ENCODE measurements at regions of chr20 and their contacts with region 1.

Region 1: GRCh38 chr20:62734881-62735821 is 26.5 kb downstream of the NTSR1 start:
- DNase-seq: peak in 1 of 2 experiments; percentile 32
- H3K4me3 ChIP-seq: no peak overlapping the region
- H3K27ac ChIP-seq: no peak overlapping the region
- H3K4me1 ChIP-seq: peaks cover 21% of the 10 kb centered on the region
- H3K27me3 ChIP-seq: no peaks in the 10 kb centered on the region
- CTCF ChIP-seq: no peak

Region 2: DNA sequence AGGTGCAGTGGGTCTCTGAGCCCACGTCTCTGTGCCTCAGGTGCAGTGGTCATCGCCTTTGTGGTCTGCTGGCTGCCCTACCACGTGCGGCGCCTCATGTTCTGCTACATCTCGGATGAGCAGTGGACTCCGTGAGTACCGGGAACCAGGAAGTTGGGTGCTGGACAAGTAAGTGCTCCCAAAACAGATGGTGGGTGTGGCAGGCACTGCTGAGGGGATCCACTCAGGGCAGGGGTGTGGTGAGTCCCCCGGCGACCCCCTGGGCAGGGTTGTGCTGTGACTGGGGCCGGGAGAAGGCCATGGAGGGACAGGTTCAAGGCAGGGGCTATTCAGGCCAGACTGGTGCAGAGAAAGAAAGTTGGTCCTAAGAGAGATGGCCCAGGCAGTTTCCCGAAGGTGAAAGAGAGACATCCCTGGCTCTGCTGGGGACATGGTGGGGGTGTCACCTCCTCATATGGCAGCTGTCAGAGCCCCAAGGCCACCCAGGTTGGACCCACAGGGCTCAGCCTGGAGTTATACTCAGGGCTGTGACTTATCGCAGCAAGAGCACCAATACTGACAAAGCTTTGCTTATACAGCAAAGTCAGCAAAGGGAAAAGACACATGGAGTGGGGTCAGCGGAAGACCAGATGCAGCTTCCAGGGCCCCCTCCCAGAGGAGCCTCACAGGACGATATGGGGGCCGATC is 23.2 kb after region 1 on chr20:
- CTCF ChIA-PET with region 1: no interaction called
- POLR2A ChIA-PET with region 1: no interaction called
- intact Hi-C with region 1: loop called (anchors 1 kb)
- DNase-seq: no peak
- H3K4me3 ChIP-seq: no peak overlapping the region
- H3K27ac ChIP-seq: no peak overlapping the region
- H3K4me1 ChIP-seq: no peaks in the 10 kb centered on the region
- H3K27me3 ChIP-seq: no peaks in the 10 kb centered on the region
- CTCF ChIP-seq: no peak

Measured in PC-9 (cell line).